CD8-positive, alpha-beta T cell (primary cell): ENCODE measurements at regions of chr21 and their contacts with region 1.

Region 1: DNA sequence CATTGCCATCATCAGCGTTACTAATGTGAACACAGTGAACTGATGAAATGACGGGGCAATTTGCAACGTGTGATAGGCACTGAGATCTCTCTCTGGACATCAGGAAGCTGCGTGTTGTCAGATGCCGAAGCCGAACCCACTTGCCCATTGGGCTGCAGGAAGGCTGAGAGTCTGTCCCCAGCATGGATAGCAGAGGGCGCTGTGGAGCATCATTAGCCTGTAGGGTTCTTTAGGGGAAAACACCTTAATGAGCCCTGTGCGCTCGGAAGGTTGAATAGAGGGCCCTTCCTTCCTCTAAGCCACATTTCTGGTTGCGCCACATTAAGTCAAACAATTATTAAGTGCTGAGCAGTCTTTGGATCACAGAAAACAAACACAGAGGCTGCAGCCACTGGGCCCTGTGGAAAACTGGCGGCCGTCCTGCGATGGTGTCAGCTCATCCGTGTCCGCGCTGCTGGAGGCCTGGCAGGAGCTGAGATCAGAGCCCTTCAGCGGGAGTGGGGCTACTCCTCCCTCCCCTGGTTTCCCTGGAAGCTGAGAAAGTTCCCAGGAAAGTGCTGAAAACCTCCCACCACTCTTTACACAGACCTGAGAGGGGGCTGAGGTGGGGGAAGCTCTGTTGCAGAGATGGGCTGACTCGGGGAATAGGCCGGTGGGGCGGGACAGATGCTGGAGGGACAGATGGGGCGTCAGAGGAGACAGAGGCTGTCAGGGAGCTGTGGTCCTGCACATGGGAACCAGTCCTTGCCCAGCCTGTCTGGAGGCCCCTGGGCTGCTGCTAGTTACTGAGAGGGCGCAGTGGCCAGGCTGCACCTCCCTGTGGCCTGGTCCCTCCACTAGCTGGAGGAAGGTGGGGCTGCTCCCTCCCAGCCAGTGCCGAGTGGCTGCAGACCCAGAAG is 12.7 kb downstream of the TFF2 start:
- DNase-seq: peak; percentile 77 to 91 (median 85)
- ATAC-seq: peak; percentile 100
- H3K4me3 ChIP-seq: no peak overlapping the region
- H3K4me3 Mint-ChIP-seq: peak overlapping the region; percentile 42
- H3K27ac ChIP-seq: no peak overlapping the region
- H3K27ac Mint-ChIP-seq: peak overlapping the region; percentile 47
- H3K4me1 ChIP-seq: peaks cover 12% of the 10 kb centered on the region
- H3K4me1 Mint-ChIP-seq: peaks cover 9% of the 10 kb centered on the region
- H3K27me3 ChIP-seq: no peaks in the 10 kb centered on the region
- H3K27me3 Mint-ChIP-seq: no peaks in the 10 kb centered on the region
- CTCF ChIP-seq: peak; percentile 83

Region 2: GRCh38 chr21:42309753-42310221 is 28.3 kb before region 1 on chr21:
- CTCF ChIA-PET with region 1: interaction called, 24 read pairs
- POLR2A ChIA-PET with region 1: interaction called, 5 read pairs
- intact Hi-C with region 1: no loop called
- DNase-seq: peak; percentile 48 to 80 (median 73)
- ATAC-seq: peak; percentile 75
- H3K4me3 ChIP-seq: no peak overlapping the region
- H3K4me3 Mint-ChIP-seq: no peak overlapping the region
- H3K27ac ChIP-seq: no peak overlapping the region
- H3K27ac Mint-ChIP-seq: no peak overlapping the region
- H3K4me1 ChIP-seq: peaks cover 18% of the 10 kb centered on the region
- H3K4me1 Mint-ChIP-seq: peaks cover 8% of the 10 kb centered on the region
- H3K27me3 ChIP-seq: peaks cover 0 to 2% of the 10 kb centered on the region in 2 experiments
- H3K27me3 Mint-ChIP-seq: peaks cover 5% of the 10 kb centered on the region
- CTCF ChIP-seq: peak; percentile 70

Region 3: DNA sequence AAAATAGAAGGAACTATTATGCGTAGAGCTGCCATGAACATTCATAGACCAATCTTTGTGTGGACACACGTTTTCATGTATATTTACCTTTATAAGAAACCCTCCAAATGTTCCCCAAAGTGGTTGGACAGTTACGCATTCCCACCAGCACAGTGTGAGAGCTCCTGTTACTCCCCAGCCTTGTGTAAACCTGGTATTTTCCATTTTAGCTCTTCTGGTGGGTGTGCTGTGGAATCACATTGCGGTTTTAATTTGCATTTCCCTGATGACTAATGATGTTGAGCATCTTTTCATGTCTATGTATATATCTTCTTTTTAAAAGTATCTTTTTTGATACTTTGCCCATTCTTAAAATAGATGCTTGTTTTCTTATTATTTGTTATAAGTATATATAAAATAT is 62.4 kb after region 1 on chr21:
- CTCF ChIA-PET with region 1: interaction called, 31 read pairs
- POLR2A ChIA-PET with region 1: interaction called, 5 read pairs
- intact Hi-C with region 1: loop called in 1 of 2 experiments (anchors 2 kb)
- DNase-seq: peak in 1 of 9 experiments; percentile 60
- ATAC-seq: no peak
- H3K4me3 ChIP-seq: no peak overlapping the region
- H3K4me3 Mint-ChIP-seq: no peak overlapping the region
- H3K27ac ChIP-seq: no peak overlapping the region
- H3K27ac Mint-ChIP-seq: no peak overlapping the region
- H3K4me1 ChIP-seq: peaks cover 39% of the 10 kb centered on the region
- H3K4me1 Mint-ChIP-seq: peaks cover 57% of the 10 kb centered on the region
- H3K27me3 ChIP-seq: no peaks in the 10 kb centered on the region
- H3K27me3 Mint-ChIP-seq: no peaks in the 10 kb centered on the region
- CTCF ChIP-seq: no peak

Region 4: DNA sequence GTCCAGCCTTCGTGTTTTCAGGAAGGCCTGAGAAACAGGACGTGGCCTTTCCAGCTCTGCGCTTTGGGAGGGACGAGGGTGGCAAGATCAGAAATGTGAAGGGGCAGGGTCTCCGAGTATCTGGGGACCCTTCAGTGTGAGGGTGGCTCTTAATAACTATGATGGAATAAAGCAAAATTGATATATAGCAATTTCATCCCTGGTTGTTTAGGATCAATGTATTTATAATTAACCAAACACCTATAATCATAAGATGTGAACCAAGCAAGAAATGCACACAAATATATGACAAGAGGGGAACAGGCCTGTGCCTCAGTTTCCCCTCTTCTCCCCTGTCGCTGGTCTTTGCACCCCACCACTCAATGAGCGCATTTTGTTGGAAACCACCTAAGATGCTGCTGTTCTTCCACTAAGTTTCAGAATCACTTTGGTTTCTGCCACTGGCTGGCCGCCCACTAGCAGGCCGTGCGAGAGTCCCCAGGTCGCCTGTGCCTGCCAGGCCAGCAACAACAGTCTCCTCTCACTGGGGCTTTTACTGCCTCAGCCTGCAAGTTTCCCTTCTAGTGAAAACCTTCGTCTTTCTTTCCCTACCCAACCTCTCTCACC is 102.2 kb after region 1 on chr21:
- CTCF ChIA-PET with region 1: interaction called, 14 read pairs
- POLR2A ChIA-PET with region 1: interaction called, 3 read pairs
- intact Hi-C with region 1: no loop called
- DNase-seq: peak in 1 of 9 experiments; percentile 31
- ATAC-seq: no peak
- H3K4me3 ChIP-seq: no peak overlapping the region
- H3K4me3 Mint-ChIP-seq: no peak overlapping the region
- H3K27ac ChIP-seq: peak overlapping the region in 1 of 2 experiments; percentile 51
- H3K27ac Mint-ChIP-seq: peak overlapping the region; percentile 84
- H3K4me1 ChIP-seq: peaks cover 26% of the 10 kb centered on the region
- H3K4me1 Mint-ChIP-seq: peaks cover 47% of the 10 kb centered on the region
- H3K27me3 ChIP-seq: peaks cover 0 to 4% of the 10 kb centered on the region in 2 experiments
- H3K27me3 Mint-ChIP-seq: no peaks in the 10 kb centered on the region
- CTCF ChIP-seq: no peak

Region 5: GRCh38 chr21:42454786-42455580 is 116.9 kb after region 1 on chr21:
- CTCF ChIA-PET with region 1: interaction called, 69 read pairs
- POLR2A ChIA-PET with region 1: interaction called, 6 read pairs
- intact Hi-C with region 1: loop called in 1 of 2 experiments (anchors 1 kb)
- DNase-seq: no peak
- ATAC-seq: no peak
- H3K4me3 ChIP-seq: no peak overlapping the region
- H3K4me3 Mint-ChIP-seq: no peak overlapping the region
- H3K27ac ChIP-seq: no peak overlapping the region
- H3K27ac Mint-ChIP-seq: no peak overlapping the region
- H3K4me1 ChIP-seq: peaks cover 20% of the 10 kb centered on the region
- H3K4me1 Mint-ChIP-seq: peaks cover 35% of the 10 kb centered on the region
- H3K27me3 ChIP-seq: no peaks in the 10 kb centered on the region
- H3K27me3 Mint-ChIP-seq: no peaks in the 10 kb centered on the region
- CTCF ChIP-seq: no peak

Region 6: DNA sequence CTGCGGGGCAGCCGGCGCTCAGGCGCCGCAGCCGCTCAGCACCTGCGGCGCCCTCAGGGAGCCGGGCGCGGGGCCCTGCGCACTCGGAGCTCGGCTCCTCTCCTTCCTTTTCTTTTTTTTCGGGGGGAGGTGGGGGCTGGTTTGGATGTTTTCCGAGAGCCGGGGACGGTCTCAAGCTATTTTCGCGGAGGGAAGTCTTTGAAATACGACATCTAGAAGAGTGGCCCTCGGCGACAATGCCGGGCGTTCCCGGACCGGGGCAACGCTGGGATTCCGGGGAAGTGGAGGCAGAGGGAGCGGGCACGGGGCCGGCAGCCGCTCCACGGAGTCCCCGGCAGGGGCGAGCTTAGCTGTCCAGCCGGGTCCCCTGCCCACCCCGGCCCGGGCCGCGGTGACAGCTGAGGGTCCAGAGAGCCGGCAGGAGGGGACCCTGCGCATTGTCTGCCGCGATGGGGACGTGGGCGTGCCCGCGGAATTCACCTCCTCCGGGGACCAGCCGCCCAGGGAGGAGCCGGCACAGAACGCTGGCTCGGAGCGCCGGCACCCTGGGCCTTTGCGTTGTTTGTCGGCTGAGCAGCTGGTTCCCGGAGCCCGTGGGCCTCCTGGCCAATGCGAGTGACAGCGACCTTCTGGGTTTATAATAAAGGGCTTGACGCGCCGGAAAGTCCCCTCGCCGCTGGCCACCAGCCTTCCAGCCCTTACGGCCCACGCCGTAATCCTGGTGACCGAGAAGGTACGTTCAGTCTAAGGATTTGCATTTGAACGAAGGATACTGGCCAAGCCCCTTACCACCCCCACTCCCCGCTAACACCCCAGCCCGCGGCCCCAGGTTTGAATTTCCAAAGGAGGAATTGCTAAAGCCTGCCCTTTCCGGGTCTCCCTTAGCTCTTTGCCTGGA is 176.2 kb after region 1 on chr21:
- CTCF ChIA-PET with region 1: interaction called, 5 read pairs
- POLR2A ChIA-PET with region 1: no interaction called
- intact Hi-C with region 1: loop called in 1 of 2 experiments (anchors 10 kb)
- DNase-seq: peak in 8 of 9 experiments; percentile 35 to 78 (median 66)
- ATAC-seq: peak; percentile 85
- H3K4me3 ChIP-seq: peak overlapping the region; percentile 75 to 78
- H3K4me3 Mint-ChIP-seq: peak overlapping the region; percentile 80
- H3K27ac ChIP-seq: peak overlapping the region; percentile 64 to 76
- H3K27ac Mint-ChIP-seq: peak overlapping the region; percentile 82
- H3K4me1 ChIP-seq: peaks cover 18% of the 10 kb centered on the region
- H3K4me1 Mint-ChIP-seq: peaks cover 42% of the 10 kb centered on the region
- H3K27me3 ChIP-seq: no peaks in the 10 kb centered on the region
- H3K27me3 Mint-ChIP-seq: no peaks in the 10 kb centered on the region
- CTCF ChIP-seq: no peak

Region 7: GRCh38 chr21:42537106-42537742 is 199.1 kb after region 1 on chr21:
- CTCF ChIA-PET with region 1: interaction called, 3 read pairs
- POLR2A ChIA-PET with region 1: no interaction called
- intact Hi-C with region 1: loop called in 1 of 2 experiments (anchors 1 kb)
- DNase-seq: peak in 2 of 9 experiments; percentile 43 to 53
- ATAC-seq: peak; percentile 66
- H3K4me3 ChIP-seq: no peak overlapping the region
- H3K4me3 Mint-ChIP-seq: no peak overlapping the region
- H3K27ac ChIP-seq: no peak overlapping the region
- H3K27ac Mint-ChIP-seq: no peak overlapping the region
- H3K4me1 ChIP-seq: peaks cover 6% of the 10 kb centered on the region
- H3K4me1 Mint-ChIP-seq: peaks cover 22% of the 10 kb centered on the region
- H3K27me3 ChIP-seq: no peaks in the 10 kb centered on the region
- H3K27me3 Mint-ChIP-seq: no peaks in the 10 kb centered on the region
- CTCF ChIP-seq: no peak